Vagina (tissue), 2 donors: ENCODE measurements at regions of chr17 and their contacts with region 1.

Region 1: DNA sequence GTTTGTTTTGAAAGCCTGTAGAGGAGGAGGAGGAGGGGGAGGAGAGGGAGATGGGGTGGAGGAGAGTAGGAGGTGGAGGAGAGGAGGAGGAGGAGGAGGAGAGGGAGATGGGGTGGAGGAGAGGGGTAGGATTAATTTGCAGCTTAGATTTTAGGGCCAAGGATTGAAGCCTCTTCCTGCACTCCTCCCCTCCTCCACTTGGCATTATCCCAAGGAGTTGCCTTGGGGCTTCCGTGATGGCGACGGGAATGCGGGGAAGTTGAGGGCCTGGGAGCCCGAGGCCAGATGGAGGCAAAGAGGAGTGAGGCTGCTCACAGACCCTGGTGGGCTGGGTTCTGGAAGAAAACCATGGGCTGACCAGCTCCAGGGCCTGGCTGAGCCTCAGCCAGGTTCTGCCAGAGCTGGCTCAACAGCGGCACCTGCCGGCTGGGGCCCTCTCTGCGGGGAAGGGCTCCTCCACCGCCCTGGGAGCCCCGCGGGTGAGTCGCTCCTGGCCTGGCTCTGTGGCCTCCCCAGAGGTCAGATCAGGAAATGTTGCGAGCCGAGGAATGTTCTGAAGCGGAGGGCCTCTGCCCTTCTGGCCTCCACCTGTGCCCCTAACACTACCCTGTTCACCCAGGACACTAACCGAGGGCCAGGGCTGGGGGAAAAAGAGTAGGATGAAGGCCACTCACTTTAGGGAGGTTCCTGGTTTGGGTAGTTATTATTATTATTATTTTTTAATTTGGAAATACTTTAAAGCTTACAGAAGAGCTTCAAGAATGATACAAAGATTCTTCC is 23.9 kb upstream of the FMNL1 start:
- DNase-seq: no peak
- H3K4me3 ChIP-seq: no peak overlapping the region
- H3K27ac ChIP-seq: peak overlapping the region; percentile 75
- H3K4me1 ChIP-seq: peaks cover 33% of the 10 kb centered on the region
- H3K27me3 ChIP-seq: no peaks in the 10 kb centered on the region
- CTCF ChIP-seq: peak; percentile 83 to 99 (median 99)
- POLR2A ChIP-seq: no peak

Region 2: DNA sequence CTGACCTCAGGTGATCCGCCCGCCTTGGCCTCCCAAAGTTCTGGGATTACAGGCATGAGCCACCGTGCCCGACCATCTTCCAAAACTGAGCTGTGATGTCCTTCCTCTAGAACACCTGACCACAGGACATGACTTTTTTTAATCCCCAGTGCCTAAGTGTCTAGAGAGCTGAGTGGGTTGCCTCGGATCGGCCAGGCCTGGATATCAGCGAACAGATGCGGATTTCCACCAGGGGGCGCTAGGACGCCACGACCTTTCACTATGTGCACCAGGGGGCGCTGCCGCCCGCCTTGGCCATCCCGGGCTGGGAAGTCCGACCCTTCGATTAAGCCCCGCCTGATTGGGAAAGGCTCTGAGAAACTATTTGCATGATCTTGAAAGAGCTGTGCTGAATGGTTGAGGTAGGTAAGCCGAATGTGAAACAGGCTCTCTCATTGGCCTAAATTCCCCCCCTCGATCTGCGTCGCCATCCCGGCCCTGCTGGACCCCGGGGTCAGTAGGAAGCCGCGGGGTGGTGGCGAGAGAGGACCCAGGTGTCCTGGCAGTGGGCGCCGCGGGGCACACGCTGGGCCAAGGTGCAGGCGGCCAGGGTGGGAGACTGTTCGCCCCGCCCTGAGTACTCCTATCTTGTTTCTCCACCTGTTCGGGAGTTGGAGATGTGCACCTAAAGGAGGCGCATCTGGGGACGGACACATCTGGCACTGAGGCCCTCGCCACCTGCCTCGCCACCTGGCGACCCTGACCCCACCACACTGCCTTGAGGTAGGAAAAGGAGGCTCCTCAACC is 62.4 kb before region 1 on chr17 and contains the start of gene ACBD4:
- intact Hi-C with region 1: loop called (anchors 5 kb)
- DNase-seq: peak; percentile 96 to 98
- H3K4me3 ChIP-seq: peak within 1 kb of the TSS; percentile 69 to 70
- H3K27ac ChIP-seq: peak within 1 kb of the TSS; percentile 90
- H3K4me1 ChIP-seq: peaks cover 32% of the 10 kb centered on the region
- H3K27me3 ChIP-seq: no peaks in the 10 kb centered on the region
- CTCF ChIP-seq: peak; percentile 100
- POLR2A ChIP-seq: peak in 1 of 2 donors; percentile 51
- total RNA-seq, gene ACBD4: 18.9 TPM